Dendritic cell treated with granulocyte-macrophage colony-stimulating factor and Interleukin-4, amounts not matched to agents 40 ng/mL and 50 ng/mL, for 4 days (primary cell): ENCODE measurements at regions of chr3 and their contacts with region 1.

Region 1: DNA sequence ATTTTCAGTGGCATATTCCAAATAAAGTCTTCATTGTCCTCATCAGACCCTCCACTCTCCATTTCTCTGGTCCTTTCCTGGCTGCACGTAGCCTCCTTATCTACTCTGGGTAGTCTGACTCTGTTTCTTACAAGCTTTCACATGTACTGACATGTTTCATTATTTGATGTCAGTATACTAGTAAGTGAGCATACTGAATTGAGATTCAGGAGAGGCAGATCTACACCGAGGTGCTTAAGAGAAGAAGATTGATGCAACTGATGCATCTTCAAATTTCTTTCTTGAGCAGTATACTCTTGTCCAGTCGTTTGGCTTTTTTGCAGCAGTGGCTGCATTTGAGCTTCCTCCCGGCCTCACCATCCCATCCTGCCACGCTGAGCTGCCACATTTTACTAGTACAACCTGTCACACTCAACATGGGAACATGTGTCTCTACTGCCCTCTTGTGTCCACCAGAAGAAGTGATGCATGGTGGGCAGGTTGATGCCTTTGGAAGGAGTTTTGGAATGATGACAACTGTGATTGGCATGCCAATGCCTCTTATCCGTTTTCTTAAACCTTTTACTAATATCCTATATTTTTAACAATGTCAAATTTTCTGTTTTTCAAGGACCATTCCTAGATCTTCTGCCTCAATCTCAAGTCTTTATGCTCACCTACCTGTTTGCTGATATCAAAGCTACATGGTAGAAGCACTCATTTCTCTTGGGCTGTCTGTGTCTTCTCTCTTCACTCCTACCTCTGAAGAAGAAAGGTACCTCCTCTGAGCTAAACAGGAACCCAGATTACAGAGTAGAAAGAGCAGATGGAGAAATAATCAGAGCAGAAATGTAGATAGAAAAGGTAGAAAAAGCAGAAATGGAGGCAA is 38.7 kb downstream of the GUCA1C start:
- H3K4me3 Mint-ChIP-seq: no peak overlapping the region
- H3K27ac Mint-ChIP-seq: no peak overlapping the region
- H3K4me1 Mint-ChIP-seq: no peaks in the 10 kb centered on the region
- H3K27me3 Mint-ChIP-seq: no peaks in the 10 kb centered on the region

Region 2: DNA sequence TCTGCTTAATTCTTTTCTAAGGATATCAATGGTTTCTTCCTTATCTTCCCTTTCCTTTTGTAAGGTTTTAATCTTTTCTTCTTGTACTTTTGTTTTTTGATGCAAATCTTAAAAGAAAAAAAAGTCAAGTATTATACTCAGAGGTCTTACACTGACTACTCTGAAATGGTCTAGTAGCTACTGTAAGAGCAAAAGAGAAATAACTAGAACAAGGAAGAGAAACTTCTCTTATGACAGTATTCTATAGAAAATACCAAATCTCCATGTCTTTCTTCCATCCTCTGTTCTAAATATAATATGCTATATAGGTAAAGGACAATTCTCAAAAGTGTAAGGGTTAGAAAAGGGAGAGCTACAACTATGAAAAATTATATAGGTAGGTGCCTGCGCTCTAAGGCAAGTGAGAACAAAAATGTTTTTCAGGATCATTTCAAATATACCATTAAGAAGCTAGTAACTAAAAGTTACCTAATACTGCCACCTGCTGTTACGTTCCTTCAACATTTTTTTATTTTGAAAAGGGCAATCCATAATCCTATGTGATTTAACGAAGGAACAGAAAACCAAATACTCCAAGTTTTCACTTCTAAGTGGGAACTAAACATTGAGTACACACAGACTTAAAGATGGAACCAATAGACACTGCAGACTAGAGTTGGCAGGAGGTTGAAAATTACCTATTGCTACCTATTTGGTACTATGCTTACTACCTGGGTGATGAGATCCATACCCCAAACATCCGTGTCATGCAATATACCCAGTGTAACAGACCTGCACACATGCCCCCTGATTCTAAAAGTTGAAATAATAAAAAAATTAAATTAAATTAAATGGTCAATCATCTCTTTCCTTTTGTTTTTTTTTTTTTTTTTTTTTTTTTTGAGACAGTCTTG is 362.5 kb before region 1 on chr3:
- intact Hi-C with region 1: loop called (anchors 2 kb)
- H3K4me3 Mint-ChIP-seq: no peak overlapping the region
- H3K27ac Mint-ChIP-seq: peak overlapping the region; percentile 69
- H3K4me1 Mint-ChIP-seq: peaks cover 13% of the 10 kb centered on the region
- H3K27me3 Mint-ChIP-seq: no peaks in the 10 kb centered on the region

Region 3: DNA sequence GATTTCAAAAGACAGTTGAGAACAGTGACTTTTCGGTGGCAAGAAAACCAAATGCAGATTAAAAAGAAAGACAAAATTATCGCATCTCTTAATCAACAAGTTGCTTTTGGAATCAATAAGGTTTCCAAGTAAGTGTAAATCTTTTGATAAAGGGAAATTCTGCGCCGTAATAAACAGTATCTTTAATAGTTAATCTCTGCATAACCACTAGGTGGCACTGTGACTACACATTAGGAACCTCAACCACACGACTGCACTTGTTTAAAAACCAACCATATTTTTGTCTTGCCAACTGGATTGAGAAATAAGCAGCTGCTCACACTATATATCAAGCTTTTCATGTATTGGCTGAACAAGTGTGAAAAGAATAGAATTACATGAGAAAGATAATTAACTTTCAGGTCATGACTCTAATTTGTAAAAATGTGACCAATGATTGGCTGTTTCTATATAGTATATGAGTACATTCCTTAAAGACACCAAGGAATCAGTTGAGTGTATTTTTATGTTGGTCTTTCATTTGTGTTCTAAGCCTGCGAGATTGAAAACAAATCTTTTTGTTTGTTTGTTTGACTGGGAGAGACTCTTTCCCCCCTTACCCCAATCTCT is 252.8 kb before region 1 on chr3:
- intact Hi-C with region 1: loop called (anchors 1 kb)
- H3K4me3 Mint-ChIP-seq: no peak overlapping the region
- H3K27ac Mint-ChIP-seq: no peak overlapping the region
- H3K4me1 Mint-ChIP-seq: no peaks in the 10 kb centered on the region
- H3K27me3 Mint-ChIP-seq: no peaks in the 10 kb centered on the region